CD8-positive, alpha-beta T cell (primary cell): ENCODE measurements at regions of chr11 and their contacts with region 1.

Region 1: GRCh38 chr11:58579192-58580129 is 598 bp downstream of the ZFP91 start:
- DNase-seq: peak; percentile 84 to 97 (median 93)
- ATAC-seq: peak; percentile 30
- H3K4me3 ChIP-seq: peak overlapping the region; percentile 70 to 82
- H3K4me3 Mint-ChIP-seq: peak overlapping the region; percentile 99
- H3K27ac ChIP-seq: peak overlapping the region; percentile 91 to 92
- H3K27ac Mint-ChIP-seq: peak overlapping the region; percentile 100
- H3K4me1 ChIP-seq: peaks cover 54% of the 10 kb centered on the region
- H3K4me1 Mint-ChIP-seq: peaks cover 72% of the 10 kb centered on the region
- H3K27me3 ChIP-seq: no peaks in the 10 kb centered on the region
- H3K27me3 Mint-ChIP-seq: no peaks in the 10 kb centered on the region
- CTCF ChIP-seq: peak; percentile 80

Region 2: GRCh38 chr11:57324886-57325734 is 1254.4 kb before region 1 on chr11 and contains the start of gene TNKS1BP1:
- CTCF ChIA-PET with region 1: no interaction called
- POLR2A ChIA-PET with region 1: no interaction called
- intact Hi-C with region 1: loop called (anchors 1 to 10 kb)
- DNase-seq: peak; percentile 74 to 93 (median 88)
- ATAC-seq: peak; percentile 88
- H3K4me3 ChIP-seq: peak within 1 kb of the TSS; percentile 75 to 98
- H3K4me3 Mint-ChIP-seq: peak within 1 kb of the TSS; percentile 87
- H3K27ac ChIP-seq: peak within 1 kb of the TSS; percentile 80 to 81
- H3K27ac Mint-ChIP-seq: peak within 1 kb of the TSS; percentile 96
- H3K4me1 ChIP-seq: peaks cover 29% of the 10 kb centered on the region
- H3K4me1 Mint-ChIP-seq: peaks cover 34% of the 10 kb centered on the region
- H3K27me3 ChIP-seq: no peaks in the 10 kb centered on the region
- H3K27me3 Mint-ChIP-seq: no peaks in the 10 kb centered on the region
- CTCF ChIP-seq: no peak
- total RNA-seq, gene TNKS1BP1: 13.5 to 14.0 TPM

Region 3: GRCh38 chr11:57657194-57658022 is 922.1 kb before region 1 on chr11 and contains the start of gene CLP1:
- CTCF ChIA-PET with region 1: no interaction called
- POLR2A ChIA-PET with region 1: no interaction called
- intact Hi-C with region 1: loop called (anchors 1 to 2 kb)
- DNase-seq: peak; percentile 97 to 100 (median 99)
- ATAC-seq: peak; percentile 94
- H3K4me3 ChIP-seq: peak within 1 kb of the TSS; percentile 59 to 74
- H3K4me3 Mint-ChIP-seq: peak within 1 kb of the TSS; percentile 94
- H3K27ac ChIP-seq: peak within 1 kb of the TSS; percentile 83
- H3K27ac Mint-ChIP-seq: peak within 1 kb of the TSS; percentile 90
- H3K4me1 ChIP-seq: peaks cover 11% of the 10 kb centered on the region
- H3K4me1 Mint-ChIP-seq: peaks cover 43% of the 10 kb centered on the region
- H3K27me3 ChIP-seq: no peaks in the 10 kb centered on the region
- H3K27me3 Mint-ChIP-seq: no peaks in the 10 kb centered on the region
- CTCF ChIP-seq: no peak
- total RNA-seq, gene CLP1: 22.7 to 27.1 TPM

Region 4: GRCh38 chr11:57741132-57742086 is 838.1 kb before region 1 on chr11 and contains the start of gene SELENOH:
- CTCF ChIA-PET with region 1: no interaction called
- POLR2A ChIA-PET with region 1: interaction called, 9 read pairs
- intact Hi-C with region 1: loop called (anchors 1 kb)
- DNase-seq: peak; percentile 83 to 97 (median 91)
- ATAC-seq: peak; percentile 85
- H3K4me3 ChIP-seq: peak within 1 kb of the TSS; percentile 90 to 97
- H3K4me3 Mint-ChIP-seq: peak within 1 kb of the TSS; percentile 92
- H3K27ac ChIP-seq: peak within 1 kb of the TSS; percentile 97
- H3K27ac Mint-ChIP-seq: peak within 1 kb of the TSS; percentile 98
- H3K4me1 ChIP-seq: peaks cover 34% of the 10 kb centered on the region
- H3K4me1 Mint-ChIP-seq: peaks cover 41% of the 10 kb centered on the region
- H3K27me3 ChIP-seq: no peaks in the 10 kb centered on the region
- H3K27me3 Mint-ChIP-seq: no peaks in the 10 kb centered on the region
- CTCF ChIP-seq: no peak
- total RNA-seq, gene SELENOH: 40.8 to 44.1 TPM

Region 5: GRCh38 chr11:58567889-58568512 is 11.5 kb before region 1 on chr11:
- CTCF ChIA-PET with region 1: interaction called, 67 read pairs
- POLR2A ChIA-PET with region 1: interaction called, 39 read pairs
- intact Hi-C with region 1: loop called (anchors 1 kb)
- DNase-seq: peak; percentile 59 to 90 (median 81)
- ATAC-seq: peak; percentile 100
- H3K4me3 ChIP-seq: no peak overlapping the region
- H3K4me3 Mint-ChIP-seq: peak overlapping the region; percentile 40
- H3K27ac ChIP-seq: peak overlapping the region in 1 of 2 experiments; percentile 6
- H3K27ac Mint-ChIP-seq: peak overlapping the region; percentile 85
- H3K4me1 ChIP-seq: peaks cover 61% of the 10 kb centered on the region
- H3K4me1 Mint-ChIP-seq: peaks cover 70% of the 10 kb centered on the region
- H3K27me3 ChIP-seq: no peaks in the 10 kb centered on the region
- H3K27me3 Mint-ChIP-seq: no peaks in the 10 kb centered on the region
- CTCF ChIP-seq: peak; percentile 87

Region 6: GRCh38 chr11:58762284-58763119 is 183.0 kb after region 1 on chr11:
- CTCF ChIA-PET with region 1: no interaction called
- POLR2A ChIA-PET with region 1: no interaction called
- intact Hi-C with region 1: no loop called
- DNase-seq: no peak
- ATAC-seq: no peak
- H3K4me3 ChIP-seq: no peak overlapping the region
- H3K4me3 Mint-ChIP-seq: no peak overlapping the region
- H3K27ac ChIP-seq: no peak overlapping the region
- H3K27ac Mint-ChIP-seq: no peak overlapping the region
- H3K4me1 ChIP-seq: no peaks in the 10 kb centered on the region
- H3K4me1 Mint-ChIP-seq: no peaks in the 10 kb centered on the region
- H3K27me3 ChIP-seq: no peaks in the 10 kb centered on the region
- H3K27me3 Mint-ChIP-seq: peaks cover 1% of the 10 kb centered on the region
- CTCF ChIP-seq: no peak

Region 7: GRCh38 chr11:58866788-58867187 is 287.3 kb after region 1 on chr11:
- CTCF ChIA-PET with region 1: no interaction called
- POLR2A ChIA-PET with region 1: no interaction called
- intact Hi-C with region 1: no loop called
- DNase-seq: no peak
- ATAC-seq: no peak
- H3K4me3 ChIP-seq: no peak overlapping the region
- H3K4me3 Mint-ChIP-seq: no peak overlapping the region
- H3K27ac ChIP-seq: no peak overlapping the region
- H3K27ac Mint-ChIP-seq: no peak overlapping the region
- H3K4me1 ChIP-seq: no peaks in the 10 kb centered on the region
- H3K4me1 Mint-ChIP-seq: no peaks in the 10 kb centered on the region
- H3K27me3 ChIP-seq: no peaks in the 10 kb centered on the region
- H3K27me3 Mint-ChIP-seq: peaks cover 11% of the 10 kb centered on the region
- CTCF ChIP-seq: no peak

Region 8: GRCh38 chr11:59142530-59143507 is 563.4 kb after region 1 on chr11 and contains the start of gene FAM111A:
- CTCF ChIA-PET with region 1: no interaction called
- POLR2A ChIA-PET with region 1: no interaction called
- intact Hi-C with region 1: loop called (anchors 1 to 2 kb)
- DNase-seq: peak; percentile 58 to 95 (median 87)
- ATAC-seq: peak; percentile 83
- H3K4me3 ChIP-seq: peak within 1 kb of the TSS; percentile 84 to 95
- H3K4me3 Mint-ChIP-seq: peak within 1 kb of the TSS; percentile 98
- H3K27ac ChIP-seq: peak within 1 kb of the TSS; percentile 81 to 95
- H3K27ac Mint-ChIP-seq: peak within 1 kb of the TSS; percentile 97
- H3K4me1 ChIP-seq: peaks cover 31% of the 10 kb centered on the region
- H3K4me1 Mint-ChIP-seq: peaks cover 54% of the 10 kb centered on the region
- H3K27me3 ChIP-seq: no peaks in the 10 kb centered on the region
- H3K27me3 Mint-ChIP-seq: no peaks in the 10 kb centered on the region
- CTCF ChIP-seq: peak; percentile 45
- total RNA-seq, gene FAM111A: 23.3 to 33.4 TPM

Region 9: DNA sequence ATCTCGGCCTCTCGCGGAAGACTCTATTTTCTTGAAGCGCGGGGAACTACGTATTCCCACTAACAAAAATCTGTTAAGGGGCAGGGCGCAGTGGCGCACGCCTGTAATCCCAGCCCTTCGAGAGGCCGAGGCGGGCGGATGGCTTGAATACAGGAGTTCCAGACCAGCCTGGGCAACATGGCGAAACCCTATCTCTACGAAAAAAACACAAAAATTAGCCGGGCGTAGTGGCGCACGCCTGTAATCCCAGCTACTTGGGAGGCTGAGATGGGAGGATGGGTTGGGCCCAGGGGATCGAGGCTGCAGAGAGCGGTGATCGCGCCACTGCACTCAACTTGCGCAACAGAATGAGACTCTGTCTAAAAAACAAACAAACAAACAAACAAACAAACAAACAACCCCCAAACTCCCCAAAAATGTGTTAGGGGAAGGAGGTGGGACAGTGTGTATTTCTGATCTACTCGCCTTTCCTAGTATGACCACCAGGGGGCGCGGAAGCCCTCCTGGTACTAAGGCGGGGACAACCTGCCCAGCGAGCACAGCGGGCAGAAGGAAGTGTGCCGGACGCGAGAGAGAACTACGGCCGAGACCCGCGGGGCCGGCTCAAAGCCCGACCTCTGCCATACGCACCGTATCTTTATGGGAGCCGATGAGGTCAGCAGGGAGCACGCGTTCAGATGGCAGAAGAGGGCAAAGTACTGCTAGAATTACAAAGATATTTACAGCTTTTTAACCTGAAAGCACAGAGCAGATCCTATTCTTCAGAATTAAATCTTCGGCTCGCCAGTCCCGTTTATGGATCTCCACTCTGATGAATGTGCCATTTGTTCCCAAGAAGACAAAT is 1174.4 kb after region 1 on chr11:
- CTCF ChIA-PET with region 1: no interaction called
- POLR2A ChIA-PET with region 1: no interaction called
- intact Hi-C with region 1: loop called in 1 of 2 experiments (anchors 5 kb)
- DNase-seq: peak; percentile 65 to 91 (median 85)
- ATAC-seq: peak; percentile 64
- H3K4me3 ChIP-seq: peak overlapping the region; percentile 70 to 97
- H3K4me3 Mint-ChIP-seq: peak overlapping the region; percentile 89
- H3K27ac ChIP-seq: no peak overlapping the region
- H3K27ac Mint-ChIP-seq: no peak overlapping the region
- H3K4me1 ChIP-seq: peaks cover 7% of the 10 kb centered on the region
- H3K4me1 Mint-ChIP-seq: peaks cover 23% of the 10 kb centered on the region
- H3K27me3 ChIP-seq: no peaks in the 10 kb centered on the region
- H3K27me3 Mint-ChIP-seq: peaks cover 9% of the 10 kb centered on the region
- CTCF ChIP-seq: peak; percentile 96